Naive thymus-derived CD8-positive, alpha-beta T cell (primary cell): ENCODE measurements at regions of chr7 and their contacts with region 1.

Region 1: DNA sequence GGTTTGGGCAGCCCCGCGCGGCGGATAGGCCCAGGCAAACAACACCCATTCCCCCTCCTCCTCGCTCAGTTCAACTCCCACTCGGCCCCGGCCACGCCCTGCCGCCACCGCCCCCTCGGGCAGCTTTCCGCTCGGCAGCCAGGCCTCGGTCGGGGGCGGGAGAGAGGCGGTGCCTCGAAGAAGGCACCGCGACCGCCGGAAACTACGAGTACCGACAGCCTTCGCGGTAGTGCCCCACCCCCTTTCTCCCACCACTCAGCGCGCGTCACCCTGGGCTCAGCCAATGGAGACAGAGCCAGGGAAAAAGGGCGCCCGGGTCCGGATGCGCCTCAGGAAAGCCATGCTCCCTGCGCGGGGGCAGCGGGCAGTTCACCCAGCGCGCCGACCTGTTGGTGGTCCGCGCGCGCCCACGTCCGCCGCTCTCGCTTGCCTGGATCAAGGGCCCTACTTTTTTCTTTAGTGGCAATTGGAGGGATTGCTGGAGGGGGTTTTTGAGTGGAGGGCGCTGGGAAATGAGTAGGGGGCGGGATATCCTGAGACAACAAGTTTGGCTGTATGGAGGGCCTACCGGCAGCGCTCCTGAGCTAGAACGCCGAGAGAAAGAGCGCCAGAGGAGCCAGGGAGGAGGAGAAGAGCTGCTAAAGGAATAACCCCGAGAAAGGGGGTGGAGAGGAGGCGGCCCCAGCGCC is 557 bp upstream of the SP4 start:
- DNase-seq: peak; percentile 96 to 100 (median 99)
- ATAC-seq: peak; percentile 74 to 75
- H3K4me3 Mint-ChIP-seq: peak overlapping the region; percentile 96 to 100 (median 99)
- H3K27ac Mint-ChIP-seq: peak overlapping the region; percentile 94 to 100 (median 99)
- H3K4me1 Mint-ChIP-seq: peaks cover 25 to 49% (median 43%) of the 10 kb centered on the region in 4 donors
- H3K27me3 Mint-ChIP-seq: no peaks in the 10 kb centered on the region

Region 2: GRCh38 chr7:21355406-21355874 is 71.9 kb before region 1 on chr7:
- POLR2A ChIA-PET with region 1: interaction called, 12 read pairs
- DNase-seq: peak in 8 of 10 donors; percentile 7 to 67 (median 43)
- ATAC-seq: peak; percentile 80 to 83
- H3K4me3 Mint-ChIP-seq: peak overlapping the region; percentile 16 to 87 (median 54)
- H3K27ac Mint-ChIP-seq: peak overlapping the region; percentile 6 to 97 (median 69)
- H3K4me1 Mint-ChIP-seq: peaks cover 27 to 80% (median 65%) of the 10 kb centered on the region in 4 donors
- H3K27me3 Mint-ChIP-seq: no peaks in the 10 kb centered on the region

Region 3: DNA sequence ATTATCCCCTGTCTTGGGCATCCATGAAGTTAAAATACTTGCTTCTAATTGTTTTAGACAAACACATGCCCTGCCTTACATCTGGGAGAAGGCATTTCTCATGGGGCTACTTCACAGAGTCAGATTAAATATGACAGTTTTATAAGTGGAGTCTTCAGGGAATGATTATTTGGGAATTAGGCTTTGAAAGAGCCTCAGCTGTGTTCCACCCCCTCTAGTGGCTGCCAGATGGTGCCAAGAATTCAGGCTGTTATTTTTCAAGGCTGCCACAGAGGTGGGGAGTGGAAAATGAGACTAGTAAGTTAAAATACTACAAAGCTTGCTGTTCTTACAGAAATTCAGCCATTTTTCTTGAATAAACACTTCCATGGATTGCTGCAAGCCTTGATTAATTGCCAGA is 69.7 kb after region 1 on chr7:
- POLR2A ChIA-PET with region 1: no interaction called
- DNase-seq: no peak
- ATAC-seq: no peak
- H3K4me3 Mint-ChIP-seq: no peak overlapping the region
- H3K27ac Mint-ChIP-seq: no peak overlapping the region
- H3K4me1 Mint-ChIP-seq: peaks cover 0 to 2% (median 0%) of the 10 kb centered on the region in 4 donors
- H3K27me3 Mint-ChIP-seq: no peaks in the 10 kb centered on the region

Region 4: DNA sequence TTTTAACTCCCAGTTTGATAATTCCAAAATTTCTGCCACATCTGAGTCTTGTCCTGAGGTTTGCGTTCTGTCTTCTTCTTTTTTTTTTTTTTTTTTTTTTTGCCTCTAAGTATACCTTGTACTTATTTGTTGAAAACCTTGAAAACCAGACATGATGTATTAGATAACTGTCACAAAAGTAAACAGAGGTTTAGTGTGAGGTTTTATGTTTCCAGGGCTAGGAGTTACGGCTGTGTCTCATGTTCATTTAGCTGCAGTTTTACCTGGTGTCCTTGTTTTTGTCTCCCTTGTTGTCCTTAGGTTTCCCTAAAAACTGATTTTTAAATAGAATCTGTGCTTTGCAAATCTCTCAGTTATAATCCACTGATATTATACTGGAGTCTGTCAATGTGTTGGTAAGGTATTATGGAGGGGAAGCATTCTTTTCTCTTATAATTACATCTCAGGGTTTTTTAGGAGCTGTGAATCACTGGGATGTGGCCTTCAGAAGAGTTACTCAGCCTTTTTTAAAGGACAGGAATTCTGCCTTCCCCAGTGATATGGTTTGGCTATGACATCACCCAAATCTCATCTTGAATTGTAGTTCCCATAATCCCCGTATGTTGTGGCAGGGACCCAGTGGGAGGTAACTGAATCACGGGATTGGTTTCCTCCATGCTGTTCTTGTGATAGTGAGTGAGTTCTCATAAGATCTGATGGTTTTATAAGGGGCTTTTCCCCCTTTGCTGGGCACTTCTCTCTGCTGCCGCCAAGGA is 423.4 kb after region 1 on chr7:
- POLR2A ChIA-PET with region 1: interaction called, 14 read pairs
- DNase-seq: no peak
- ATAC-seq: no peak
- H3K4me3 Mint-ChIP-seq: peak overlapping the region; percentile 53 to 90 (median 82)
- H3K27ac Mint-ChIP-seq: peak overlapping the region; percentile 49 to 97 (median 90)
- H3K4me1 Mint-ChIP-seq: peaks cover 17 to 36% (median 25%) of the 10 kb centered on the region in 4 donors
- H3K27me3 Mint-ChIP-seq: no peaks in the 10 kb centered on the region